Caco-2 (cell line): ENCODE measurements at regions of chr5 and their contacts with region 1.

Region 1: GRCh38 chr5:40798012-40798855 is at the start of gene PRKAA1:
- DNase-seq: peak; percentile 86 to 95
- H3K4me3 ChIP-seq: peak within 1 kb of the TSS; percentile 67
- H3K4me3 Mint-ChIP-seq: peak within 1 kb of the TSS; percentile 89
- H3K27ac Mint-ChIP-seq: peak within 1 kb of the TSS; percentile 86
- H3K4me1 ChIP-seq: peaks cover 21% of the 10 kb centered on the region
- H3K4me1 Mint-ChIP-seq: peaks cover 25% of the 10 kb centered on the region
- H3K27me3 ChIP-seq: no peaks in the 10 kb centered on the region
- H3K27me3 Mint-ChIP-seq: no peaks in the 10 kb centered on the region
- CTCF ChIP-seq: peak; percentile 77 to 90
- total RNA-seq, gene PRKAA1: 64.6 and 69.2 TPM in 2 replicates

Region 2: GRCh38 chr5:40714001-40714400 is 84.2 kb before region 1 on chr5:
- CTCF ChIA-PET with region 1: no interaction called
- POLR2A ChIA-PET with region 1: no interaction called
- intact Hi-C with region 1: no loop called
- DNase-seq: no peak
- H3K4me3 ChIP-seq: no peak overlapping the region
- H3K4me3 Mint-ChIP-seq: no peak overlapping the region
- H3K27ac Mint-ChIP-seq: no peak overlapping the region
- H3K4me1 ChIP-seq: no peaks in the 10 kb centered on the region
- H3K4me1 Mint-ChIP-seq: no peaks in the 10 kb centered on the region
- H3K27me3 ChIP-seq: no peaks in the 10 kb centered on the region
- H3K27me3 Mint-ChIP-seq: no peaks in the 10 kb centered on the region
- CTCF ChIP-seq: no peak

Region 3: GRCh38 chr5:40775846-40776657 is 22.2 kb before region 1 on chr5:
- CTCF ChIA-PET with region 1: interaction called, 5 read pairs
- POLR2A ChIA-PET with region 1: interaction called, 3 read pairs
- intact Hi-C with region 1: loop called (anchors 1 kb)
- DNase-seq: no peak
- H3K4me3 ChIP-seq: no peak overlapping the region
- H3K4me3 Mint-ChIP-seq: no peak overlapping the region
- H3K27ac Mint-ChIP-seq: peak overlapping the region; percentile 44
- H3K4me1 ChIP-seq: peaks cover 19% of the 10 kb centered on the region
- H3K4me1 Mint-ChIP-seq: peaks cover 18% of the 10 kb centered on the region
- H3K27me3 ChIP-seq: no peaks in the 10 kb centered on the region
- H3K27me3 Mint-ChIP-seq: no peaks in the 10 kb centered on the region
- CTCF ChIP-seq: no peak

Region 4: GRCh38 chr5:40784027-40784653 is 14.1 kb before region 1 on chr5:
- CTCF ChIA-PET with region 1: interaction called, 4 read pairs
- POLR2A ChIA-PET with region 1: interaction called, 5 read pairs
- intact Hi-C with region 1: loop called (anchors 1 kb)
- DNase-seq: peak; percentile 80 to 90
- H3K4me3 ChIP-seq: no peak overlapping the region
- H3K4me3 Mint-ChIP-seq: peak overlapping the region; percentile 61
- H3K27ac Mint-ChIP-seq: peak overlapping the region; percentile 67
- H3K4me1 ChIP-seq: peaks cover 46% of the 10 kb centered on the region
- H3K4me1 Mint-ChIP-seq: peaks cover 31% of the 10 kb centered on the region
- H3K27me3 ChIP-seq: no peaks in the 10 kb centered on the region
- H3K27me3 Mint-ChIP-seq: no peaks in the 10 kb centered on the region
- CTCF ChIP-seq: no peak

Region 5: DNA sequence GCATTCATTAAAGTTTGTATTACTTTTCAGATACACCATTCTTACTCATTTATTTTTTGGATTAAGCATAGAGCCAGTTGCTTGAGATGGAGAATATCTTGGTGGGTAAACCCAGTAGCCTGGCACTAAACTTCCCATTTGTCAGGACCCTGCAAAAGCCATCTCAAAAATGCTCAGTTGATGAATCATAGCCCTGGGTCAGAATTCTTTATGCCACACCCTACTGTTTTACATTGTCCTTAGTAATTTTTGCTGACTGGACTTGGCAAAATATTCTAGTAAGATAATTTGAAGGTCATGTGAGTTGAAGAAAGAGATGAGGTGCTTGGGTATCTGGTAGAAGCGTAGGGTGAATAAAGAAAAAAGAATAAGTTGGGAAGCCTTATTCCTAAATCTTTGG is 161.8 kb after region 1 on chr5:
- CTCF ChIA-PET with region 1: no interaction called
- POLR2A ChIA-PET with region 1: no interaction called
- intact Hi-C with region 1: no loop called
- DNase-seq: no peak
- H3K4me3 ChIP-seq: no peak overlapping the region
- H3K4me3 Mint-ChIP-seq: no peak overlapping the region
- H3K27ac Mint-ChIP-seq: no peak overlapping the region
- H3K4me1 ChIP-seq: no peaks in the 10 kb centered on the region
- H3K4me1 Mint-ChIP-seq: no peaks in the 10 kb centered on the region
- H3K27me3 ChIP-seq: no peaks in the 10 kb centered on the region
- H3K27me3 Mint-ChIP-seq: no peaks in the 10 kb centered on the region
- CTCF ChIP-seq: no peak